Testis (tissue), 5 donors: ENCODE measurements at regions of chr11 and their contacts with region 1.

Region 1: GRCh38 chr11:45771566-45772448 is 33.1 kb upstream of the SLC35C1 start:
- DNase-seq: peak; percentile 89
- H3K4me3 ChIP-seq: peak overlapping the region; percentile 36 to 58
- H3K27ac ChIP-seq: peak overlapping the region in 1 of 2 donors; percentile 50
- H3K4me1 ChIP-seq: no peaks in the 10 kb centered on the region
- H3K27me3 ChIP-seq: no peaks in the 10 kb centered on the region
- CTCF ChIP-seq: peak; percentile 79 to 90 (median 89)
- POLR2A ChIP-seq: no peak

Region 2: GRCh38 chr11:45371251-45372115 is 400.3 kb before region 1 on chr11:
- intact Hi-C with region 1: loop called (anchors 10 kb)
- DNase-seq: peak; percentile 82
- H3K4me3 ChIP-seq: peak overlapping the region; percentile 6 to 31
- H3K27ac ChIP-seq: no peak overlapping the region
- H3K4me1 ChIP-seq: peaks cover 5% of the 10 kb centered on the region
- H3K27me3 ChIP-seq: no peaks in the 10 kb centered on the region
- CTCF ChIP-seq: peak; percentile 59 to 95 (median 82)
- POLR2A ChIP-seq: no peak

Region 3: GRCh38 chr11:45872513-45873356 is 100.9 kb after region 1 on chr11:
- intact Hi-C with region 1: no loop called
- DNase-seq: peak; percentile 71
- H3K4me3 ChIP-seq: no peak overlapping the region
- H3K27ac ChIP-seq: no peak overlapping the region
- H3K4me1 ChIP-seq: no peaks in the 10 kb centered on the region
- H3K27me3 ChIP-seq: no peaks in the 10 kb centered on the region
- CTCF ChIP-seq: peak; percentile 40 to 53 (median 48)
- POLR2A ChIP-seq: no peak